Right cardiac atrium (tissue), 5 donors: ENCODE measurements at regions of chr7 and their contacts with region 1.

Region 1: DNA sequence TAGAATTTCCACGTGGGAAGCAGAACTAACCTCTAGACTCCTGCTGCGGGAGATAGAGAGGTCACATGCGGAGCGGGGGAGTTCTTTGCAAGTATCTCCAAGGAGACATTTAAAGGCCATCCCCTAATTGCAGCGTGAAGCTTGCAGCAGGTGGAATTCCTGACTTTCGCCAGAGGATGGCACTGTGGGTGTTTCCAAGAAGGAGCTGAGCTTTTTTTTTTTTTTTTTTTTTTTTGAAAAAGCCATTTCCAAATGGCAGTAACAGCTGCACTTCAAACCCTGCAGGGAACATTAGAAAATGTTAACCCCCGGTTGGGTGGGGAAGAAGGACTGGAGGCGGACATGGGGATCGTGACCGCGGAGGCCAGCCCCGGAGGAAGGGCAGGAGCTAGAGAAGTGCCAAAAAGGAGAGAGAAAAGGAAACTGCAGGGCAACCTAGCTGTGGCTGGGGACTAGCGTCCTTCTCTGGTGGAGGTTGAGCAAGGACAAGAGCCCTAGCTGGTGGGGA is 487.7 kb downstream of the TYW1 start:
- DNase-seq: peak; percentile 31 to 60 (median 57)
- ATAC-seq: peak; percentile 35 to 63
- H3K4me3 ChIP-seq: peak overlapping the region; percentile 44
- H3K27ac ChIP-seq: no peak overlapping the region
- H3K4me1 ChIP-seq: peaks cover 2% of the 10 kb centered on the region
- H3K27me3 ChIP-seq: no peaks in the 10 kb centered on the region

Region 2: GRCh38 chr7:67625257-67625737 is 141.0 kb after region 1 on chr7:
- intact Hi-C with region 1: loop called in 1 of 4 experiments (anchors 10 kb)
- DNase-seq: peak; percentile 84 to 92 (median 90)
- ATAC-seq: peak; percentile 92
- H3K4me3 ChIP-seq: peak overlapping the region; percentile 26
- H3K27ac ChIP-seq: no peak overlapping the region
- H3K4me1 ChIP-seq: peaks cover 2% of the 10 kb centered on the region
- H3K27me3 ChIP-seq: no peaks in the 10 kb centered on the region

Region 3: DNA sequence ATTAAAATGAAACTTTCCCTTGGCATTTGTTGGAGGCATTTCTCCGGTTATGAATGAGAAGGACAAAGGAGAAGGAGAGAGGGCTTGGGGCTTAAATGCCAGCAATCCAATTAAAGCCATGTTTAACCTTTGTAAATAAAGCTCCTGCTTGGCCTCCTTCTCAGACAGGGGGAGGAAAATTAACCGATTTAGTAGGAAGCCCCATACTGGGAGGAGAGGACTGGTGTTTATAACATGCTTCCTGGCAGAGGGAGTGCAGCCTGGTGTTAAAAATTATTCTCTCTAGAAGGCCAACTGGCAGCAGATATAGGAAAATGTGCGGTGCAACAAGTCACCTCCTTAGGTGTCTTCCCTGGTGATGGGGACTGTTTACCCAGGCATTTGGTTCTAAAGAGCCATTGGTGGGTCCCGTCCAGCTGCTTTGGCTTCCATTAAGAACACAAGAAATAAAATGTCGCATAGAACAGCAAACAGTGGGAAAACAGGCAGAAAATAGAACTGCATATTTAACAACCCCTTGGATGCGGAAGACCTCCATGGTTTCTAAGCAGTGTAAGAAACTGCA is 358.8 kb after region 1 on chr7:
- intact Hi-C with region 1: no loop called
- DNase-seq: no peak
- ATAC-seq: no peak
- H3K4me3 ChIP-seq: no peak overlapping the region
- H3K27ac ChIP-seq: no peak overlapping the region
- H3K4me1 ChIP-seq: no peaks in the 10 kb centered on the region
- H3K27me3 ChIP-seq: no peaks in the 10 kb centered on the region